ENCODE measurements at regions of chr20 and their contacts with region 1.

Region 1: DNA sequence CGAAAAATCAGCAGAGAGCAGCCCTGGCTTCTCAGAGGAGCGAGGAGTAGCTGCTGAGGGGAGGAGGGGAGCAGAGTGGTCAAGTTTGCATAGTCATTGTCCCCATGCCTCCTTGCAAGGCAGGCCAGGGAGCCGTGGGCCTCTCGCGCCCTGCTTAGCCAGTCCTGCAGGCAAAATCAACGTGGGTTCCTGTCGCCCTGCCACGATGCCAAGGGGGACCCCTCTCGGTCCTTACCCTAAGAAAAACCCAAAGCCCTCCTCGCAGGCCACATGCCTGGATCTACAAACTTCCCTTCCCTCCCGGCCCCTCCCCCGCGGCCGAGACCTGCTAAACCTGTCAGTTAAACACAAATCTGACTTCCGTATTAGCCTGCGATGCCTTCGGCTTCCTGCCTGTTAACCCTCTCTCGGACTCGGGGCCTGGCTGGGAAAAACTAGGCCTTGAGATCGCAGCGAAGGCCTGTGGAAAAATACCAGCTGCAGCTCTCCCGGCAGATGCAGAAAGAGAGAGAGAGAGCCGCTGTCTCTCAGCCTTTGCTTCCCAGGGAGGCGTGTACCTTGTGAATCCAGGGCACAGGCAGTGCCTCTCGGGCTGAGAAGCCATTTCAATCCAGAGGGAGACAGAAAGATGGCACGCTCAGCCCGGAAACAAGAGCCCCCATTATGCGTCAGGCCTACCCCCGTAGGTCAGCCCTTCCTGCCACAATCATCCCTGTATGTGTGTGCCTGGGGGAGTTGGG is 967 bp upstream of the ZMYND8 start:
- DNase-seq: peak; percentile 73 to 97 (median 83)

Region 2: DNA sequence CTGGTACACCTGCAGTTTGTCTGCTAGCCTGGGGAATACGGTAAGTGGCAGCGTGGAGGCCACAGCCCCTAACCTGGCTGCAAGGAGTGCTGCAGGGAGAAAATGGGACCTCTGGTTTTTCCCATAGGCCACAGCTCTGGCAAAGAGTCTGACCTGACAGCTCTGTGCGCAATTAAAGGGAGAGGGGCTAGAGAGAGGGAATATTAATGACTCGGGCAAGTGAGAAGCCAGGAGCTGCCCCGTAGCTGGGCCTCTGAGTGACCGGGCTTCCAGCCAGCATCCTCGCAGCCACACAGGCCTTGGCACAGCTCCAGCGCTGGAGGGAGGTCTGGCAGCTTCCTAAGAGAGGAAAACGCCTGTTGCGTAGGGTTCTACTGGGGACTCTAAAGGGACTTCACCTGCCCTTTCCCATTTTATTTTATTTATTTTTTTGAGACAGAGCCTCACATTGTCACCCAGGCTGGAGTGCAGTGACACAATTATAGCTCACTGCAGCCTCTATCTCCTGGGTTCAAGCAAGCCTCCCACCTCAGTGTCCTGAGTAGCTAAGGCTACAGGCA is 788.8 kb before region 1 on chr20:
- intact Hi-C with region 1: no loop called
- DNase-seq: peak; percentile 88 to 99 (median 91)

Region 3: DNA sequence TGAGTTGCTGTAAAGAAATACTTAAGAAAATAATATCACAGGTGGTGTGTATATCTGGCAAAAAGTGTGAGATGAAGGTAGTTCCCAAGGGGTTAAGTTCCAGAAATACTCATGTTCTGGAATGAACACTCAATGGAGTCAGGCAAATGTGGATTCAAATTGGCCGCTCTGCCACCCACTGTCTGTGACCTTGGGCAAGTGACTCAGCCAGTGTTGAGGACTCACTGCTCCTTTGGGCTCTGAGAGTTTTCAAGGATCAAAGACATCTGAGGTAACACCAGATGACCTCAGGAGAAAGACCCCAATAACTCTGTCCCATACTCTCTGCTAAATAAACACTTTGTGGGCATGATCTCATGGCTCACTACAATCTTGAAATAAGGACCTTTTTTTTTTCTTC is 522.0 kb before region 1 on chr20:
- intact Hi-C with region 1: no loop called
- DNase-seq: no peak

Region 4: DNA sequence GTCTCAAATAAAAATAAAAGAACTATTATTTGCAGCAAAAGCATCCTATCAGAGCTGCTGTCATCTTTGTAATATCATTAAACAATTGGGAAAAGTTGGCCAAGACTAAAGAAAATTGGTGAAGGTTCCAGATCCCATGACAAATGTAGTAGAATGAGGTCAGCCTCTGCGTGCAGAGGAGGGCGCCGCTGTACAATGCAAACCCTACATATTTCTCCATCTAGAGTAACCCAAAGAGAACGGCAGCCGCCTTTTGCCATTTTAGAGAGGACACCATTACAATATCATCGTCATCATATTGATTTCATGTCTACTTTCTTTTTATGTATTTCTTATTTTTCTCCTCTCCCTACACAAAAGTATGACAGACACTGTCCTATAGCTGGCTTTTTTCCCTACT is 60.5 kb before region 1 on chr20:
- intact Hi-C with region 1: loop called (anchors 5 kb)
- DNase-seq: peak in 2 of 10 donors; percentile 41 to 63

Region 5: GRCh38 chr20:47318586-47319516 is 38.6 kb before region 1 on chr20:
- intact Hi-C with region 1: loop called (anchors 2 kb)
- DNase-seq: peak; percentile 27 to 91 (median 52)

Measured in posterior cingulate gyrus (tissue), 11 donors.